PC-3 (cell line): ENCODE measurements at regions of chr10 and their contacts with region 1.

Region 1: GRCh38 chr10:114550756-114551635 is 107.1 kb downstream of the ABLIM1 start:
- DNase-seq: peak; percentile 55
- ATAC-seq: no peak
- H3K4me3 ChIP-seq: no peak overlapping the region
- H3K27ac ChIP-seq: no peak overlapping the region
- H3K4me1 ChIP-seq: no peaks in the 10 kb centered on the region
- H3K27me3 ChIP-seq: no peaks in the 10 kb centered on the region
- CTCF ChIP-seq: peak; percentile 65

Region 2: GRCh38 chr10:114304017-114304570 is 246.9 kb before region 1 on chr10:
- CTCF ChIA-PET with region 1: interaction called, 4 read pairs
- POLR2A ChIA-PET with region 1: no interaction called
- intact Hi-C with region 1: loop called (anchors 1 kb)
- DNase-seq: peak; percentile 87
- ATAC-seq: peak; percentile 59
- H3K4me3 ChIP-seq: peak overlapping the region; percentile 65
- H3K27ac ChIP-seq: no peak overlapping the region
- H3K4me1 ChIP-seq: peaks cover 12% of the 10 kb centered on the region
- H3K27me3 ChIP-seq: no peaks in the 10 kb centered on the region
- CTCF ChIP-seq: peak; percentile 72

Region 3: GRCh38 chr10:114470956-114471905 is 79.8 kb before region 1 on chr10:
- CTCF ChIA-PET with region 1: interaction called, 12 read pairs
- POLR2A ChIA-PET with region 1: no interaction called
- intact Hi-C with region 1: loop called (anchors 1 kb)
- DNase-seq: peak; percentile 70
- ATAC-seq: peak; percentile 84
- H3K4me3 ChIP-seq: no peak overlapping the region
- H3K27ac ChIP-seq: no peak overlapping the region
- H3K4me1 ChIP-seq: peaks cover 14% of the 10 kb centered on the region
- H3K27me3 ChIP-seq: no peaks in the 10 kb centered on the region
- CTCF ChIP-seq: peak; percentile 72

Region 4: DNA sequence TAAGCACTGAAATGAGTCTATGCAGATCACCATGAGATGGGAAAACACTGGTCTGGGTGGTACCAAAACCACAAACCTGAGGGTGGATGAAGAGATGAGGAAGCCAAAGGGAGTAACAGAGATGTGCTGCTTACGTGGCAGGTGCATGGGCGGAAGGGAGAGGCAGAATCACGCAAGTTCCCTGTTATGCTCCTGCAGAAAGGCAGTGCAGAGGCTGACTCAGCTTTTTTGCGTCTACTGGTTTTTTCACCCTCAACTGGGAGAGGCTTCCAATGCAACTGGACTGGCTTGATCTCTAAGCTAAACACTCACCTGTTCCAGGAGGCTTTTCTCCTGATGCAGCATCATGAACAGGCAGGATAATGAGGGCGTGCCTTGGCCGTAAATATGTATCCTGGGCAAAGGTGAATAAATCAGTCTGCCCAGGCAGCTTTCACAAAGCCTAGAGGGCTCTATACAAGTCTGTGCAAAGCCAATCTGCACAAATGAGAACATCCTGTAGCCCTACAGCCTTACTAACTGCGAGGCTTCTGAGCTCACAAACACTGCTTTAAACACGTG is 51.3 kb before region 1 on chr10:
- CTCF ChIA-PET with region 1: no interaction called
- POLR2A ChIA-PET with region 1: no interaction called
- intact Hi-C with region 1: no loop called
- DNase-seq: peak; percentile 43
- ATAC-seq: peak; percentile 27
- H3K4me3 ChIP-seq: no peak overlapping the region
- H3K27ac ChIP-seq: no peak overlapping the region
- H3K4me1 ChIP-seq: peaks cover 9% of the 10 kb centered on the region; the same call in 1 of the 2 replicates
- H3K27me3 ChIP-seq: no peaks in the 10 kb centered on the region
- CTCF ChIP-seq: no peak

Region 5: DNA sequence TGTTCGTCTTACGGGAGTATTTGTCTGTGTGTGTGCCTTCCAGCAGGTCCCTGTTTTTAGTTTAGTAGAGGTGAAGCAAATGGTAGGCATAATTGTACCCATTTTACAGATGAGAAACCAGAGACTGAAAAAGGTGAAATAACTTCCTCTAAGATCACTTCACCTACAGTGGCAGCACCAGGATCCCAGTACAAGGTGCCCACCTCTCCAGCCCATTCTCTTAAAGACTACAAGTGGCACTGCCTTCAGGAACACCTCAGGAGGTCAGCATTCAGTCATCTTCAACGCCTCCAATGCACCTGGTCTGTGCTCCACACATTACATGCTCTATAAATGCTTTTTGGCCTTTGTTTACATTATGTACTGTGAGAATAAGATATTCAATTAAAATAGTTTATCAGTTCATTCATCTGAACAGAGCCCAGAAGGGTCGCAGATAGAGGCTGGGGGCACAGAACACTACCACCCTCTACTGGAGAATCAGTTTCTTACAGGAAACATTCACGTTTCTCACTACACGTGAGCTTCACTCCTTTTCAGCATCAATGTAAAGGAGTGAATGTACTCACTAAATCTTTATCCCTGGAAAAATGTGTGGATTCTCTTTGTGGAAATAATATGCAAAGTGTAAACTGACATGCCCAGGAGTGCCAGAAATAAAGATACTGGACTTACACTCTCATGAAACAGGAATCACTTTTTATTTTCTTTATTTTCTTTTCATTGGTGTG is 152.5 kb after region 1 on chr10:
- CTCF ChIA-PET with region 1: interaction called, 4 read pairs
- POLR2A ChIA-PET with region 1: interaction called, 4 read pairs
- intact Hi-C with region 1: loop called (anchors 1 kb)
- DNase-seq: peak; percentile 53
- ATAC-seq: peak; percentile 40
- H3K4me3 ChIP-seq: no peak overlapping the region
- H3K27ac ChIP-seq: no peak overlapping the region
- H3K4me1 ChIP-seq: peaks cover 6% of the 10 kb centered on the region
- H3K27me3 ChIP-seq: no peaks in the 10 kb centered on the region
- CTCF ChIP-seq: peak; percentile 81